Activated B cell treated with CpG ODN at 0.5 μM for 24 hours (primary cell): ENCODE measurements at regions of chr6 and their contacts with region 1.

Region 1: GRCh38 chr6:56555438-56555872 is 87.2 kb downstream of the DST start:
- DNase-seq: no peak
- ATAC-seq: no peak
- H3K4me3 Mint-ChIP-seq: no peak overlapping the region
- H3K27ac Mint-ChIP-seq: no peak overlapping the region
- H3K4me1 Mint-ChIP-seq: no peaks in the 10 kb centered on the region
- H3K27me3 Mint-ChIP-seq: peaks cover 2% of the 10 kb centered on the region
- CTCF ChIP-seq: no peak

Region 2: GRCh38 chr6:56517155-56517745 is 38.2 kb before region 1 on chr6:
- CTCF ChIA-PET with region 1: no interaction called
- POLR2A ChIA-PET with region 1: no interaction called
- intact Hi-C with region 1: no loop called
- DNase-seq: no peak
- ATAC-seq: no peak
- H3K4me3 Mint-ChIP-seq: no peak overlapping the region
- H3K27ac Mint-ChIP-seq: no peak overlapping the region
- H3K4me1 Mint-ChIP-seq: no peaks in the 10 kb centered on the region
- H3K27me3 Mint-ChIP-seq: no peaks in the 10 kb centered on the region
- CTCF ChIP-seq: no peak

Region 3: DNA sequence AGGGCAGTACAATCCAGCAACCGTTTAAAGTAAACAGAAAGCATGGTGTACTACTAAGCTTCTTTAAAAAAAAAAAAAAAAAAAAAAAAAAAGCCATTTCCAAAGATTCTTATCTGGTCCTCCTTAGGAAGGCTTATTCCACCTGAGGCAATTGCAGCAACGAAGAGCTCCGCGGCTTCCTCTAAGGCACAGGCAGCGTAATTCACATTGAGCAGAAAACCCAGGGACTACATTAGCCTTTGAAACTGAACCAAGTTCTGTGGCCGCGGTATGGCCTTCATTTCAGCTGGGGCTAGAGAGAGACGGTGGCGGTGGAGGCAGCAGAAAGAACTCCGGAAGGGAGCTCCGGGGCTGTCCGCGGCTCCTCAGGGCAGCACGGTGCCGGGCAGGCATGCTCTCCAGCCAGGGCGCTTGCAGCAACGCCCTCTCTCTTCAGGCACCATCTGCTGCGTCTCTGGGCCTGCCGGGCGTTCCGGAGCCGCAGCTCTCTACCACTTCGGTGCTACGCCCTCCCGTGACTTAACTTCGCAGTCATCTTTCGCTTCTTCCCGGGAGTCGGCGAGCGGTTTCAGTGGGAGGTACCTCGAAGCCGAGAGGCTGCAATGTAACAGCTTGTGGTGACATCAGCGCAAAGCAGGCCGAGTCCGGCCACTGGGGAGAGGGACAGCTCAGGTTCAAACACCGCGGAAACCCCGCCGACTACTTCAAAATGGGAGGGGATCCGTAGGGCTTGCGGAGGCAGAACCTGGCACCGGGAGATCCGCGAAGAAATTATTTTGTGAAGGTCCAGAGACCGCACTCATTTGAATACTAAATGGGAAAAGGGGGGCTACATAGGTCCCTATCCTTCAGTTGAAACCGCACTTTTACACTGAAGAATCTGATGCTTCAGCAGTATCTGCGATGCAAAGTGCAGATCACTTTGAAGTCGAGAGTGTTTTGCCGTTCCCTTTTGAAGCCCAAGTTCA is 12.8 kb before region 1 on chr6:
- CTCF ChIA-PET with region 1: interaction called, 3 read pairs
- POLR2A ChIA-PET with region 1: no interaction called
- intact Hi-C with region 1: loop called (anchors 2 kb)
- DNase-seq: peak; percentile 42
- ATAC-seq: peak; percentile 86
- H3K4me3 Mint-ChIP-seq: no peak overlapping the region
- H3K27ac Mint-ChIP-seq: no peak overlapping the region
- H3K4me1 Mint-ChIP-seq: no peaks in the 10 kb centered on the region
- H3K27me3 Mint-ChIP-seq: peaks cover 2% of the 10 kb centered on the region
- CTCF ChIP-seq: no peak